ENCODE measurements at regions of chr12 and their contacts with region 1.

Region 1: DNA sequence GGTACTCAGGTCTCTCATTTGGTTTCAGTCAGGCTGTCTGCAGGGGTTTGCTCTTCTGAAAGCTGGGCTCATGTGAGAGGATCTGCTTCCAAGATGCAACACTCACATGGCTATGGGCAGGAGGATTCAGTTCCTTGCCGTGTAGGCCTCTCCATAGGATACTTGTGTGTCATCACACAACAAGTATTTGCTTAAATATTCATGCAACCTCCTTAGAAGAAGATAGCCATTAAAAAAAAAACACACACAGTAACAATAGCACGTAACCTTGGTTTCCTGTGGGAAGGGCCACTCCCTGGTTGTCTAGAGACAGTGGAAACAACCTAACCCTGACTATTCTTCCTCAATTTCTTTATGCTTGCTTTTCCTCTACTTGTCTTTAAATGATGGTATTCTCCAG is 31.8 kb upstream of the CLEC4E start:
- DNase-seq: no peak
- CTCF ChIP-seq: no peak

Region 2: GRCh38 chr12:8554451-8555195 is 17.9 kb before region 1 on chr12:
- CTCF ChIA-PET with region 1: interaction called, 13 read pairs
- POLR2A ChIA-PET with region 1: no interaction called
- DNase-seq: no peak
- CTCF ChIP-seq: no peak

Region 3: DNA sequence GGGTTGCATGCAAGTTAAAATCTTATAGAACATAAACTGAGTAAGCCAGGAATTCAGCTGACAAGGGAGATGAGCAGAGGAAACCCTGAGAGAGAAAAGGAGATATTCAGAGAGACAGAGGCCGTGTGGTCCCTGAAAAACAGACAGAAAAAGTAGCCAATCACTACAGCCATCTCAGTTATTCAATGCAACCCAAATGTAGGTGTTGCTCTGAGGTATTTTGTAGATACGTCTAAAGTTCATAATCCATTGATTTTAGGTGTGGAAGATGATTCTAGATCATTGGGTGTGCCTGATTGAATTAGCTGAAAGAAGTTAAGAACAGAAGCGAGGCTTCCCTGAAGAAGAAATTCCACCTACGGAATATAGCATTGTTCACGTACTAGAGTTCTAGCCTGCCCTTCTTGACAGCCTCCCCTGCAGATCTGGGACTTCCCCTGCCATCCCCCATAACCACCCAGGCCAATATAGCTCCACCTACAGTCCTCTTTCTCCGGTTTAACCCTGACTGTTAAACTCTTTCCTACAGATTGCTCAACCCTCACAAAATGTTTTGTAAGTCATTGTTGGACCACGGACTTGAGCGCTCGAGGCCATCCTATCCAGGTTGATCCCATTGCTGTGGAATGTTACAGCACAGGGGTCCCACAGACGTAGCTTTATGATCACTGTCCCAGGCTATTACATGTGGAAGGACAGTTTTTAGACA is 18.5 kb after region 1 on chr12:
- CTCF ChIA-PET with region 1: interaction called, 13 read pairs
- POLR2A ChIA-PET with region 1: no interaction called
- DNase-seq: peak; percentile 80
- CTCF ChIP-seq: peak; percentile 34

Region 4: GRCh38 chr12:8771072-8771471 is 198.6 kb after region 1 on chr12:
- CTCF ChIA-PET with region 1: no interaction called
- POLR2A ChIA-PET with region 1: no interaction called
- DNase-seq: no peak
- CTCF ChIP-seq: no peak

Measured in GM10248 (cell line).